ENCODE measurements at regions of chr10 and their contacts with region 1.

Region 1: DNA sequence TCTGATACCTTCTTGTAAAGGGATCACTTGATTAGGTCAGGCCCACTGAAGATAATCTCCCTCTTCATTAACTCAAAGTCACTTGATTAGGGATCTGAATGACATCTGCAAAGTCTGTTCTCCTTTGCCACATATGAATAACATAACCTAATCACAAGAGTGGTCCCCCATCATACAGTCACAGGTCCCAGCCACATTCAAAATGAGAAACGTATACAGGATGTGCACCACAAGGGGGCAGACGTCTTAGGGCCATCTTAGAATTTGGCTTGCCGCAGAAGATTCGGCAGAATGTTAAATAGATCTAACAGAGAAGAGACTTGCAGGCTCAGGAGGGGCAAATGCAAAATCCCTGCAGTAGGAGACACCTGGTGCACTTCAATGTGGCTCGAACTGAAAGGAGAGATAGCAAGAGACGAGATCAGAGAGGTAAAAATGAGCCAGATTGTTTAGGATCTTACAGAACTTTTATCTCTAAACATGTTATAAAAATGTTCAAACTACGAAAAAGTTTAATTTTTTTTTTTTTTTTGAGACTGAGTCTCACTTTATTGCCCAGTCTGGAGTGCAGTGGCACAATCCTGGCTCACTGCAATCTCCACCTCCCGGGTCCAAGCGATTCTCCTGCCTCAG is 10.4 kb upstream of the SMC3 start:
- DNase-seq: peak in 1 of 2 donors; percentile 36
- H3K4me3 ChIP-seq: no peak overlapping the region
- H3K27ac ChIP-seq: no peak overlapping the region
- H3K4me1 ChIP-seq: no peaks in the 10 kb centered on the region
- H3K27me3 ChIP-seq: peaks cover 0 to 15% of the 10 kb centered on the region in 2 donors
- CTCF ChIP-seq: peak; percentile 52 to 63

Region 2: DNA sequence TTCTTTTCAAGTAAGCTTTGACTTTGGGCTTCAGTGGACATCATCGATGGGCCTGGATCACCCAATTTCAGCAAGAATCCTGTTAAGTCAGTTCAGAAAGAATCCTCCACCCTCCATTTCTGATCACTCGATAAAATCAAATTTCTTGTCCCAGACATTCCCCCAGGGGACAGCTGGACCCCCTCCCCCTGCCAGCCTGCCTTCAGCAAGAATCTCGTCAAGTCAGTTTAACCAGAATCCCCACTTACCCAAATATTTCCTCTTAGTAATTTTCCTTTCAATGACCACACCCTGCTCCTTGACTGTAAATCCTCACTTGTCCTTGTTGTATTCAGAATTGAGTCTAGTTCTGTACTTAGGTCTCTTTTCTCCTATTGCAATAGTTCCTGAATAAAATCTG is 1400.7 kb before region 1 on chr10:
- intact Hi-C with region 1: no loop called
- DNase-seq: no peak
- H3K4me3 ChIP-seq: no peak overlapping the region
- H3K27ac ChIP-seq: no peak overlapping the region
- H3K4me1 ChIP-seq: no peaks in the 10 kb centered on the region
- H3K27me3 ChIP-seq: no peaks in the 10 kb centered on the region
- CTCF ChIP-seq: no peak

Region 3: DNA sequence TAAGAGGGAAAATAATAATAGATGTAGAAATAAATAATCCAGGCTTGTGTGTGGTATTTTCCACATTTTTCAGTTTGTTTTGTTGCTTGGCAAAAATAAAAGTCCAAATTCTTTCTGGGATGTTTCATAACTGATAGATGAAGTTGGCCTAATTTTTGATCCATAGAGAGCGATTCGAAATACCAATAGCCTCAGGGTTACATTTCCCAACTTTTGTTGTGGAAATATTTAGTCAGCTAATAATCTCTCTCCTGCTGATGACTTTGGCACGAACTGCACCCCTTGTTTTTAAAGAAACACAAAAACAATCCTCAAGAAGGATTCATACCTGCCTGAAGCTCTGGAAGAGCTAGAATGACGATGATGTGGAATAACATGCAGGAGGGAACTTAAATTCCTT is 1002.9 kb after region 1 on chr10:
- intact Hi-C with region 1: loop called (anchors 5 kb)
- DNase-seq: no peak
- H3K4me3 ChIP-seq: no peak overlapping the region
- H3K27ac ChIP-seq: no peak overlapping the region
- H3K4me1 ChIP-seq: no peaks in the 10 kb centered on the region
- H3K27me3 ChIP-seq: no peaks in the 10 kb centered on the region
- CTCF ChIP-seq: no peak